ENCODE measurements at regions of chr12 and their contacts with region 1.

Region 1: GRCh38 chr12:57213058-57213715 is 3.4 kb upstream of the NXPH4 start:
- DNase-seq: peak; percentile 62 to 92 (median 79)
- ATAC-seq: peak; percentile 59 to 68 (median 65)
- H3K4me3 ChIP-seq: no peak overlapping the region
- H3K4me3 Mint-ChIP-seq: peak overlapping the region in 1 of 3 donors; percentile 76
- H3K27ac ChIP-seq: no peak overlapping the region
- H3K27ac Mint-ChIP-seq: peak overlapping the region in 1 of 2 donors; percentile 69
- H3K4me1 ChIP-seq: peaks cover 2 to 49% of the 10 kb centered on the region in 2 experiments
- H3K4me1 Mint-ChIP-seq: peaks cover 30 to 40% (median 37%) of the 10 kb centered on the region in 3 donors
- H3K27me3 ChIP-seq: peaks cover 0 to 64% of the 10 kb centered on the region in 2 experiments
- H3K27me3 Mint-ChIP-seq: peaks cover 38 to 41% of the 10 kb centered on the region in 2 donors

Region 2: GRCh38 chr12:57229634-57230380 is 16.6 kb after region 1 on chr12 and contains the start of gene SHMT2:
- CTCF ChIA-PET with region 1: interaction called, 16 to 22 read pairs
- POLR2A ChIA-PET with region 1: no interaction called
- DNase-seq: peak; percentile 68 to 96 (median 84)
- ATAC-seq: peak; percentile 60 to 77 (median 71)
- H3K4me3 ChIP-seq: peak within 1 kb of the TSS; percentile 83 to 94
- H3K4me3 Mint-ChIP-seq: peak within 1 kb of the TSS; percentile 93 to 96 (median 95)
- H3K27ac ChIP-seq: peak within 1 kb of the TSS; percentile 31
- H3K27ac Mint-ChIP-seq: peak within 1 kb of the TSS; percentile 84 to 86
- H3K4me1 ChIP-seq: peaks cover 17 to 68% of the 10 kb centered on the region in 2 experiments
- H3K4me1 Mint-ChIP-seq: peaks cover 45 to 71% (median 54%) of the 10 kb centered on the region in 3 donors
- H3K27me3 ChIP-seq: peaks cover 0 to 40% of the 10 kb centered on the region in 2 experiments
- H3K27me3 Mint-ChIP-seq: peaks cover 13 to 23% of the 10 kb centered on the region in 2 donors
- total RNA-seq, gene SHMT2: 31.0 to 80.9 (median 55.6) TPM

Region 3: GRCh38 chr12:57238854-57239554 is 25.8 kb after region 1 on chr12:
- CTCF ChIA-PET with region 1: interaction called, 39 to 66 read pairs
- POLR2A ChIA-PET with region 1: no interaction called
- DNase-seq: peak; percentile 54 to 95 (median 78)
- ATAC-seq: peak; percentile 58 to 75 (median 60)
- H3K4me3 ChIP-seq: peak overlapping the region; percentile 73 to 78
- H3K4me3 Mint-ChIP-seq: peak overlapping the region; percentile 92 to 95 (median 92)
- H3K27ac ChIP-seq: no peak overlapping the region
- H3K27ac Mint-ChIP-seq: peak overlapping the region in 1 of 2 donors; percentile 78
- H3K4me1 ChIP-seq: peaks cover 46 to 93% of the 10 kb centered on the region in 2 experiments
- H3K4me1 Mint-ChIP-seq: peaks cover 65 to 85% (median 82%) of the 10 kb centered on the region in 3 donors
- H3K27me3 ChIP-seq: peaks cover 12 to 93% of the 10 kb centered on the region in 2 experiments
- H3K27me3 Mint-ChIP-seq: peaks cover 40 to 61% of the 10 kb centered on the region in 2 donors